CD14-positive monocyte (primary cell): ENCODE measurements at regions of chr10 and their contacts with region 1.

Region 1: DNA sequence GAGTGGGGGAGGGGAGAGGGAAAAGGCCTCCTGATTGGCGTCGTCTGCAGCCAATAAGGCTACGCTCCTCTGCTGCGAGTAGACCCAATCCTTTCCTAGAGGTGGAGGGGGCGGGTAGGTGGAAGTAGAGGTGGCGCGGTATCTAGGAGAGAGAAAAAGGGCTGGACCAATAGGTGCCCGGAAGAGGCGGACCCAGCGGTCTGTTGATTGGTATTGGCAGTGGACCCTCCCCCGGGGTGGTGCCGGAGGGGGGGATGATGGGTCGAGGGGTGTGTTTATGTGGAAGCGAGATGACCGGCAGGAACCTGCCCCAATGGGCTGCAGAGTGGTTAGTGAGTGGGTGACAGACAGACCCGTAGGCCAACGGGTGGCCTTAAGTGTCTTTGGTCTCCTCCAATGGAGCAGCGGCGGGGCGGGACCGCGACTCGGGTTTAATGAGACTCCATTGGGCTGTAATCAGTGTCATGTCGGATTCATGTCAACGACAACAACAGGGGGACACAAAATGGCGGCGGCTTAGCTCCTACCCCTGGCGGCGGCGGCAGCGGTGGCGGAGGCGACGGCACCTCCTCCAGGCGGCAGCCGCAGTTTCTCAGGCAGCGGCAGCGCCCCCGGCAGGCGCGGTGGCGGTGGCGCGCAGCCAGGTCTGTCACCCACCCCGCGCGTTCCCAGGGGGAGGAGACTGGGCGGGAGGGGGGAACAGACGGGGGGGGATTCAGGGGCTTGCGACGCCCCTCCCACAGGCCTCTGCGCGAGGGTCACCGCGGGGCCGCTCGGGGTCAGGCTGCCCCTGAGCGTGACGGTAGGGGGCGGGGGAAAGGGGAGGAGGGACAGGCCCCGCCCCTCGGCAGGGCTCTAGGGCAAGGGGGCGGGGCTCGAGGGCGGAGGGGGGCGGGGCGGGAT is at the start of gene KAT6B:
- DNase-seq: peak; percentile 100
- H3K4me3 ChIP-seq: peak within 1 kb of the TSS; percentile 77 to 95 (median 88)
- H3K4me3 Mint-ChIP-seq: peak within 1 kb of the TSS; percentile 88 to 93
- H3K27ac ChIP-seq: peak within 1 kb of the TSS; percentile 79 to 90
- H3K27ac Mint-ChIP-seq: peak within 1 kb of the TSS; percentile 94 to 99 (median 98)
- H3K4me1 ChIP-seq: peaks cover 27 to 47% of the 10 kb centered on the region in 2 donors
- H3K4me1 Mint-ChIP-seq: peaks cover 49% of the 10 kb centered on the region
- H3K27me3 ChIP-seq: no peaks in the 10 kb centered on the region
- H3K27me3 Mint-ChIP-seq: peaks cover 0 to 4% (median 0%) of the 10 kb centered on the region in 3 donors
- CTCF ChIP-seq: no peak
- polyA plus RNA-seq, gene KAT6B: 3.3 to 6.4 (median 6.2) TPM

Region 2: GRCh38 chr10:74898201-74898976 is 72.0 kb after region 1 on chr10:
- intact Hi-C with region 1: loop called in 1 of 2 experiments (anchors 10 kb)
- DNase-seq: peak in 2 of 3 donors; percentile 29 to 30
- H3K4me3 ChIP-seq: no peak overlapping the region
- H3K4me3 Mint-ChIP-seq: no peak overlapping the region
- H3K27ac ChIP-seq: no peak overlapping the region
- H3K27ac Mint-ChIP-seq: peak overlapping the region in 4 of 7 donors; percentile 27 to 79 (median 48)
- H3K4me1 ChIP-seq: peaks cover 9 to 11% of the 10 kb centered on the region in 2 donors
- H3K4me1 Mint-ChIP-seq: peaks cover 23% of the 10 kb centered on the region
- H3K27me3 ChIP-seq: no peaks in the 10 kb centered on the region
- H3K27me3 Mint-ChIP-seq: no peaks in the 10 kb centered on the region
- CTCF ChIP-seq: no peak

Region 3: GRCh38 chr10:74949434-74949833 is 123.0 kb after region 1 on chr10:
- intact Hi-C with region 1: no loop called
- DNase-seq: no peak
- H3K4me3 ChIP-seq: no peak overlapping the region
- H3K4me3 Mint-ChIP-seq: no peak overlapping the region
- H3K27ac ChIP-seq: no peak overlapping the region
- H3K27ac Mint-ChIP-seq: no peak overlapping the region
- H3K4me1 ChIP-seq: no peaks in the 10 kb centered on the region
- H3K4me1 Mint-ChIP-seq: no peaks in the 10 kb centered on the region
- H3K27me3 ChIP-seq: no peaks in the 10 kb centered on the region
- H3K27me3 Mint-ChIP-seq: no peaks in the 10 kb centered on the region
- CTCF ChIP-seq: no peak

Region 4: GRCh38 chr10:75111367-75111906 is 285.0 kb after region 1 on chr10 and contains the start of gene SAMD8:
- intact Hi-C with region 1: loop called in 1 of 2 experiments (anchors 10 kb)
- DNase-seq: peak; percentile 97 to 98 (median 98)
- H3K4me3 ChIP-seq: peak within 1 kb of the TSS; percentile 53 to 95 (median 87)
- H3K4me3 Mint-ChIP-seq: peak within 1 kb of the TSS; percentile 99 to 100
- H3K27ac ChIP-seq: peak within 1 kb of the TSS; percentile 96 to 100
- H3K27ac Mint-ChIP-seq: peak within 1 kb of the TSS; percentile 98 to 100 (median 99)
- H3K4me1 ChIP-seq: peaks cover 29 to 42% of the 10 kb centered on the region in 2 donors
- H3K4me1 Mint-ChIP-seq: peaks cover 52% of the 10 kb centered on the region
- H3K27me3 ChIP-seq: no peaks in the 10 kb centered on the region
- H3K27me3 Mint-ChIP-seq: peaks cover 0 to 4% (median 3%) of the 10 kb centered on the region in 3 donors
- CTCF ChIP-seq: peak; percentile 16
- polyA plus RNA-seq, gene SAMD8: 13.0 to 18.8 (median 13.7) TPM